ENCODE measurements at regions of chr4 and their contacts with region 1.

Region 1: DNA sequence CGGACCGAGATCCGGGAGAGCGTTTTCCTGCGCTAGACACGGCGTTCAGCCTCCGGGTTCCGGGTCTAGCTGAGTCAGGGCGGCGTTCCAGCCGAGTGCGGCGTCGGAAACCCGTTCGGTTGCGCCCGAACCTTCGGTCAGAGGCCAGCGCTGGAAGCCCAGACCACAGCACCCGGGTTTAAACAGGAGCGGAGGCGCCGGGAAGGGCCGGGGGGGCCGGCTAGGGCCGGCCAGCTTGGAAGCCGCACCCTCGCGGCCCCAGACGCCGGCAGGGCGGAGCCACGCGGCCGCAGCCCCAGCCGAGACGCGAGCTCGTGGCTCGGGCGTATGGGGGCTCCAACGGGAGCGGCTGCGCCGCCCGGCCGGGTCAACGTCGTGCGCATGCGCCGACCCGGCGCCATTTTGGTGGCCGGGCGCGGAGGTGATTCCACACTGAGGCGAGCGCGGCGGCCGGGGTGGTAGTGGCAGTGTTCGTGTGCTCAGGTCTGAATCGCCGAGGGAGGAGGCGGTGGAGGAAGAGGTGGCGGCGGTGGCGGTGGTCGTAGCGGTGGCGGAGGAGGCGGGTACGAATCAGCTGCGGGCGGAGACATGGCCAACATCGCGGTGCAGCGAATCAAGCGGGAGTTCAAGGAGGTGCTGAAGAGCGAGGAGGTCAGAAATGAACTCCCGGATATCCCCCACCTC is at the start of gene UBE2K:
- DNase-seq: peak; percentile 50 to 94
- H3K4me3 ChIP-seq: peak within 1 kb of the TSS; percentile 88 to 92
- H3K27ac ChIP-seq: peak within 1 kb of the TSS; percentile 91 to 92
- H3K4me1 ChIP-seq: peaks cover 0 to 7% of the 10 kb centered on the region in 2 donors
- H3K27me3 ChIP-seq: no peaks in the 10 kb centered on the region
- CTCF ChIP-seq: peak in 1 of 3 experiments; percentile 6
- total RNA-seq, gene UBE2K: 9.7 TPM

Region 2: DNA sequence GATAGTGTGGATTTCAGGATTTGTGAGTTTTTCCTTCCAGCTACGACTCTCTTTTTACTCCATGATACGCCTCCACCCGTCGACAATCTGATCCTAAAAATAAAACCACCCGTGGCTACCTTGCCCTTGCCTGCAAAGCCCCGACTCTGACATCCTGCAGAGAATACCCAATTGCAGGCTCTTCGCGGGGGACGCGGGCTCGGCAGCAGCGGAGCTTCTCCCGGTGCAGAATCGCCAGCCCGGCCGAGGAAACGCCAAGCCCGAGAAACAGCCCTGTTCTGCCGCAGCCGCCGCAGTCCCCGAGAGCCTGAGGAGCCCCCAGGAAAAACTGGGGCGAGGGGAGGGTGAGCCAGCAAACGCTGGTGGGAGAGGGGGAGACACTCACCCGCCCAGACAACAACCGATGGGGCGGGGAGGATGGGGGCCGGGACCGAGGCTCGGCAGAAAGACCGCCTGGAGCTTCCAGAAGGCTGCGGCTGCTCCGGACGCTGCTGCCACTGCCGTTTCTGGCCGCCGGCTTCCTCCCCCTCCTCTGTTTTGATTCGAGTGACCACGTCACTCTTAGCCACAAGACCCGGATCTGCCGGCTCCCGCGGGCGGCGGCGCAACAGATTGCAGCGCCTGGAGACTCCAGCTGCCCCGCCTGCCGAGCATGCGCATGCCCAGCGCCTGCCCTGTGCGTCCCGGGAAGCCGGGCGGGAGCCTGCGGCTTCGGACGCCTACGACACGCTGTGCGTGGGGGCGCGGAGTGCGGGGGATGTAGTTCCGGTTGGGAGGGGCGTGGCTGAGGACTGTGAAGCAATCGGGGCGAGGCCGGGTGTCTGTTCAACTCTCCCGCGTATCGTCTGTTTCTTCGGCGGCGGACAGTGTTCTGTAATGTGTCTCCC is 59.3 kb before region 1 on chr4 and contains the start of gene SMIM14:
- intact Hi-C with region 1: loop called (anchors 2 kb)
- DNase-seq: peak; percentile 96 to 99
- H3K4me3 ChIP-seq: peak within 1 kb of the TSS; percentile 70 to 86
- H3K27ac ChIP-seq: peak within 1 kb of the TSS; percentile 96
- H3K4me1 ChIP-seq: peaks cover 0 to 12% of the 10 kb centered on the region in 2 donors
- H3K27me3 ChIP-seq: no peaks in the 10 kb centered on the region
- CTCF ChIP-seq: peak in 1 of 3 experiments; percentile 32
- total RNA-seq, gene SMIM14: 48.2 TPM

Region 3: DNA sequence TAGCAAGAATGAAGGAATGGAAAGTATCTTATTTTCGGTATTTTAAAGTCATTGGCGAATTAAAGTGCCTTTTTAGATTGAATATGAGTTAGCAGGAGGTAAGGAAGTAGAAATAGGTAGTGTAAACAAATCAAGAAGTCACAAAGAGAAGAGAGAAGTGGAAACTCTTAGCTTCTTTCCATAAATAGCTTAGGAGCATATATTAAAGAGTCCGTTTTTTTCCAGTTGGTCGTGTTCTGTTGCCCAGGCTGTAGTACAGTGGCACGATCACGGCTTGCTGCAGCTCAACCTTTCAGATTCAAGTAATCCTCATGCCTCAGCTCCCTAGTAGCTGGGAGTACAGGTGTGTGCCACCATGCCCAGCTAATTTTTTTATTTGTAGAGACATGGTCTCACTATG is 56.4 kb after region 1 on chr4:
- intact Hi-C with region 1: loop called (anchors 10 kb)
- DNase-seq: no peak
- H3K4me3 ChIP-seq: no peak overlapping the region
- H3K27ac ChIP-seq: no peak overlapping the region
- H3K4me1 ChIP-seq: no peaks in the 10 kb centered on the region
- H3K27me3 ChIP-seq: no peaks in the 10 kb centered on the region
- CTCF ChIP-seq: no peak

Region 4: GRCh38 chr4:39977489-39978377 is 279.9 kb after region 1 on chr4 and contains the start of gene PDS5A:
- intact Hi-C with region 1: loop called (anchors 1 kb)
- DNase-seq: peak; percentile 44 to 93
- H3K4me3 ChIP-seq: peak within 1 kb of the TSS; percentile 98 to 99
- H3K27ac ChIP-seq: peak within 1 kb of the TSS; percentile 94 to 95
- H3K4me1 ChIP-seq: peaks cover 0 to 18% of the 10 kb centered on the region in 2 donors
- H3K27me3 ChIP-seq: no peaks in the 10 kb centered on the region
- CTCF ChIP-seq: peak; percentile 71 to 94 (median 83)
- total RNA-seq, gene PDS5A: 52.9 TPM

Region 5: GRCh38 chr4:40065010-40065409 is 367.1 kb after region 1 on chr4:
- intact Hi-C with region 1: no loop called
- DNase-seq: no peak
- H3K4me3 ChIP-seq: no peak overlapping the region
- H3K27ac ChIP-seq: no peak overlapping the region
- H3K4me1 ChIP-seq: no peaks in the 10 kb centered on the region
- H3K27me3 ChIP-seq: no peaks in the 10 kb centered on the region
- CTCF ChIP-seq: no peak